ENCODE measurements at regions of chr12 and their contacts with region 1.

Region 1: GRCh38 chr12:110330544-110330943 is 49.5 kb downstream of the ATP2A2 start:
- DNase-seq: no peak
- ATAC-seq: no peak
- H3K4me3 ChIP-seq: no peak overlapping the region
- H3K27ac ChIP-seq: no peak overlapping the region
- H3K4me1 ChIP-seq: no peaks in the 10 kb centered on the region
- H3K27me3 ChIP-seq: no peaks in the 10 kb centered on the region
- CTCF ChIP-seq: no peak
- EP300 ChIP-seq: no peak
- POLR2A ChIP-seq: no peak
- RAD21 ChIP-seq: no peak

Region 2: DNA sequence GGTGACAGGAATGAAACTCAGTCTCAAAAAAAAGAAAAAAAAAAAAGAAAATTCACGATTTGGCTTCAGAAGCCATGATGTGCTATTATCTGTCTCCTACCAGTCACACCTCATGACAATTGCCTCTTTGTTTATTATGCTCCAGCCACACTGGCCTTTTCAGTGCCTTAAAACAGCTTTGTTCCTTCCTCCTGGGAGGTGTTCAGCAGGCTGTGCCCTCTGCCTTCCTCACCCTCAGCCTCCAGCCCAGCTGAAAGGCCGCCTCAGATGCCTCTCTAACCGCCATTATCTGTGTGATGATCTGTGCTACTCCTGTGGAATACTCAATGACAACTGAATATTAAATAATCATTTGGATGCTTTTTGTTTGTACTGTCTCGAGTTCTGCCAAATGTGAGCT is 128.2 kb after region 1 on chr12:
- CTCF ChIA-PET with region 1: no interaction called
- POLR2A ChIA-PET with region 1: interaction called, 10 read pairs
- RAD21 ChIA-PET with region 1: no interaction called
- SMC1A ChIA-PET with region 1: no interaction called
- in situ Hi-C with region 1: no loop called
- intact Hi-C with region 1: no loop called
- DNase-seq: no peak
- ATAC-seq: no peak
- H3K4me3 ChIP-seq: no peak overlapping the region
- H3K27ac ChIP-seq: no peak overlapping the region
- H3K4me1 ChIP-seq: peaks cover 17% of the 10 kb centered on the region
- H3K27me3 ChIP-seq: no peaks in the 10 kb centered on the region
- CTCF ChIP-seq: no peak
- EP300 ChIP-seq: no peak
- POLR2A ChIP-seq: no peak
- RAD21 ChIP-seq: no peak

Measured in GM12878 (cell line).